H1 (cell line): ENCODE measurements at regions of chr4 and their contacts with region 1.

Region 1: DNA sequence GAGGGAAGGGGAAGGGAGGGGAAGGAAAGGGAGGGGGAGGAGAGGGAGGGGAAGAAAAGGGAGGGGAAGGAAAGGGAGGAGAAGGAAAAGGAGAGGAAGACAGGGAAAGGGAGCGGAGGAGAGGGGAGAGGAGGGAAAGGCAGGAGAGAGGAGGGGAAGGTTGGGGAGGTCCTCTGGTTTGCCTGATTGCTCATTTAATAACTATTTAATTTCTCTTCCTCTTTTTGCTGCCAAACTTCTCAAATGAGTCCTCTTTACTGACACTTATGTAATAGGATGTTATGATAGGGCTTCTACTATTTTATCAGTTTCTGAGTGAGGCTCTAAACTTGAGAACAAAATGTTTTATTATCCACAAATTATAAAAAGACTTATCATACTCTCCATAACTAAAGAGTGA is 35.4 kb upstream of the PPA2 start:
- DNase-seq: no peak
- H3K4me3 ChIP-seq: no peak overlapping the region
- H3K27ac ChIP-seq: no peak overlapping the region
- H3K4me1 ChIP-seq: no peaks in the 10 kb centered on the region
- H3K27me3 ChIP-seq: no peaks in the 10 kb centered on the region
- CTCF ChIP-seq: no peak
- EP300 ChIP-seq: no peak
- POLR2A ChIP-seq: no peak
- RAD21 ChIP-seq: no peak

Region 2: GRCh38 chr4:105496899-105497298 is 12.4 kb before region 1 on chr4:
- CTCF ChIA-PET with region 1: interaction called, 12 read pairs
- POLR2A ChIA-PET with region 1: no interaction called
- DNase-seq: no peak
- H3K4me3 ChIP-seq: no peak overlapping the region
- H3K27ac ChIP-seq: no peak overlapping the region
- H3K4me1 ChIP-seq: no peaks in the 10 kb centered on the region
- H3K27me3 ChIP-seq: no peaks in the 10 kb centered on the region
- CTCF ChIP-seq: peak; percentile 30 to 39 (median 37); a peak in 3 of 4 replicates
- EP300 ChIP-seq: no peak
- POLR2A ChIP-seq: no peak
- RAD21 ChIP-seq: peak; percentile 57 to 63

Region 3: DNA sequence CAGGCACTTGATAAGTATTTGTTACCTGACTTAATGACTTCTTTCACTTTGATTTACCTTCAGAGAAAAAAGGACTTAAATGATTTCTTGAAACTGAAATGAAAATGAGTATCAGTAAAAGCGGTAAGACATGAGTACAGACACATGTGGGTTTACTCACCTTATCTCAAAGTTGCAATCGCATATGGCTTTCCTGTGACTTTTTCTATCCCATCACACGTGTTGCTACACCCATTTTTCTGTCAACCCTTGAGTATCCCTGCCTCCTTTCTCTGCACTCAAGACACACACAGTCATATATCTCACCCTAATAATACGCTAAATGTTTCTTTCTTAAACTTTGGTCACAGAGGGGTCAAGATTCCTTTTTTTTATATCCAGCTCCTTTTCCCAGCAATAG is 32.1 kb after region 1 on chr4:
- CTCF ChIA-PET with region 1: no interaction called
- POLR2A ChIA-PET with region 1: no interaction called
- DNase-seq: no peak
- H3K4me3 ChIP-seq: no peak overlapping the region
- H3K27ac ChIP-seq: no peak overlapping the region
- H3K4me1 ChIP-seq: no peaks in the 10 kb centered on the region
- H3K27me3 ChIP-seq: peaks cover 0 to 2% (median under 1%) of the 10 kb centered on the region in 4 experiments; a peak in 2 of 7 replicates
- CTCF ChIP-seq: no peak
- EP300 ChIP-seq: no peak
- POLR2A ChIP-seq: no peak
- RAD21 ChIP-seq: no peak